Cardiac septum (tissue), 1 donor: ENCODE measurements at regions of chr6 and their contacts with region 1.

Region 1: GRCh38 chr6:31546962-31547726 is at the start of gene NFKBIL1:
- DNase-seq: peak; percentile 98
- total RNA-seq, gene NFKBIL1: 9.5 TPM

Region 2: DNA sequence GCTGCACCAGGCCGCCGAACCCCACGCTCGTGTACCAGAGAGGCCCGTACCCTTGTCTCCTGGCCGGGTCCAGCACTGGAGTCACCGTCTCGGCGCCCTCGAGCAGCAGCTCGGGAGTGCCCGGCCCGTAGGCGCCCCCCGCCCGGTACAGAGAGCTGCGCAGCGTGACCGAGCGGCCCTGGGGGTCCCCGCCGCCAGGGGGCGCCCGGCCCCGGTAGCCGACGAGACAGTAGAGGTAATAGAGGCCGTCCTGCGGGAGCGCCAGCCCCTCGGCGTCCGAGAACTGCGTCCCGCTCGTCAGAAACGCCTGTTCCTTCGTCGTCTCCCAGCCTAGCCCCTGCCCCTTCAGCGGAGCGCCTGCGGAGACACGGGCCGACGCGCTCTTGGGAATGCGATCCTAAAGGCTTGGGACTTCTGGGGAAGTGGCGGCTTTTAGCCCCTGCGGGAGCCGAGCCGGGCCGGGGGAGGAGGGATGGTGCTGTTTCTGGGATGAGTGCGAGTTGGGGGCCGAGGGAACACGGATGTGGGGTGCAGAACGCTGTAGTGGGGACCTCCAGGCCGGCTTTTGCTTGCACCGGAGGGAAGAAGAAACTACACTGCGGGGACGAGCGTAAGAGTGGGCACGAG is 33.8 kb after region 1 on chr6:
- intact Hi-C with region 1: loop called (anchors 5 kb)
- DNase-seq: peak; percentile 96

Region 3: DNA sequence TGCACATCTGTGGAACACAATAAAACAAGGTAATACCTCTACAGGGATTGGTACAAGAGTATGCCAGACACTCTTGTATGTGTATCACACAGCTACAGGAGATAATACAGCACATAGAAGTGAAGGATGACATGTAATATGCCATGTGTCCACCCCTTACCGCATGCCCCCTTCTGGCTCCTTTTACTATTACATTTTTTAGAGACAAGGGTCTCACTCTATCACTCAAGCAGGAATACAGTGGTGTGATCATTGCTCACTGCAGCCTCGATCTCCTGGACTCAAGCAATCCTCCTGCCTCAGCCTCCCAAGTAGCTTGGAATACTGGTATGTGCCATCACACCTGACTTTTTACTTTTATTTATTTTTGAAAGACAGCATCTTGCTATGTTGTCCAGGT is 49.9 kb after region 1 on chr6:
- intact Hi-C with region 1: loop called (anchors 1 kb)
- DNase-seq: no peak

Region 4: DNA sequence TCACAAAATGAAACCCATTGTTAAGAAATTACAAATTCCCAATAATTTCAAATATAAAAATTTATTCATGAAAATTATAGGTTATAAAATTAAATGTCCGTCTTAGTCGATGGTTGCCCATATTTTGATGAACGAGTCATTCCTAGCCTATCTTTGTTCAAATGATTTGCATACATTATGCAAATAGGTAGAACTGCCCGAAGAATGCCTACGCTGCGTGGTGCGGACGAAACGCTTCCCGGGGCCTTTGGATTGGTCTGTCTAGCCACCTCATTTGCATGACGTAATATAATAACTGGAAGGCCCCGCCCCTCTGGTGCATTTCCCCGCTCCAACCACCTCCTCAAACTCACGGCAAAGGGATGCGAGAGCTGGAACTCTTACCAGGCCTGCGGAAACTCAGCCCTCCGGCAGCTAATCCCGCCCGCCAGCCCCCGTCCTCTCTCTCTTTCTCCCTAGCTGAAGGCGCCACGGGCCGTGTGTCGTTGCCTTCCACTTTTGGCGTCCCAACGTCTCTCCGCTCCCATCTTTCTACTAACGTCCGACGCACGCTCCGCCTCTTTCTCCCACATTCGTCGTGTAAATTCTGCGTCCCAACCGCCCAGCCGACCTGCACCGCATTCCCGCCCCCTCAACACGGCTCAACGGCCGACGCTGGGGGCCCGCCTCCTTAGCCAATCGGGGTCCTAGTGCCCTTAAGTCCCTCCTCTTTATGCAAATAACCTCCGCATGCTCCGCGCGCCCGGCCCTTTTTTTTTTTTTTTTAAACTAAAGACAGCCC is 72.9 kb after region 1 on chr6:
- intact Hi-C with region 1: loop called (anchors 1 kb)
- DNase-seq: peak; percentile 98